B cell (primary cell): ENCODE measurements at regions of chr5 and their contacts with region 1.

Region 1: GRCh38 chr5:180950291-180950949 is 38.2 kb upstream of the BTNL3 start:
- DNase-seq: no peak
- ATAC-seq: no peak
- H3K4me3 ChIP-seq: no peak overlapping the region
- H3K4me3 Mint-ChIP-seq: no peak overlapping the region
- H3K27ac ChIP-seq: no peak overlapping the region
- H3K27ac Mint-ChIP-seq: no peak overlapping the region
- H3K4me1 ChIP-seq: no peaks in the 10 kb centered on the region
- H3K4me1 Mint-ChIP-seq: no peaks in the 10 kb centered on the region
- H3K27me3 ChIP-seq: no peaks in the 10 kb centered on the region
- H3K27me3 Mint-ChIP-seq: no peaks in the 10 kb centered on the region
- CTCF ChIP-seq: no peak

Region 2: GRCh38 chr5:181005791-181006190 is 55.4 kb after region 1 on chr5:
- CTCF ChIA-PET with region 1: no interaction called
- POLR2A ChIA-PET with region 1: no interaction called
- intact Hi-C with region 1: loop called (anchors 10 kb)
- DNase-seq: no peak
- ATAC-seq: no peak
- H3K4me3 ChIP-seq: no peak overlapping the region
- H3K4me3 Mint-ChIP-seq: no peak overlapping the region
- H3K27ac ChIP-seq: no peak overlapping the region
- H3K27ac Mint-ChIP-seq: no peak overlapping the region
- H3K4me1 ChIP-seq: no peaks in the 10 kb centered on the region
- H3K4me1 Mint-ChIP-seq: peaks cover 3% of the 10 kb centered on the region
- H3K27me3 ChIP-seq: peaks cover 0 to 8% (median 0%) of the 10 kb centered on the region in 4 experiments
- H3K27me3 Mint-ChIP-seq: peaks cover 4% of the 10 kb centered on the region
- CTCF ChIP-seq: no peak

Region 3: DNA sequence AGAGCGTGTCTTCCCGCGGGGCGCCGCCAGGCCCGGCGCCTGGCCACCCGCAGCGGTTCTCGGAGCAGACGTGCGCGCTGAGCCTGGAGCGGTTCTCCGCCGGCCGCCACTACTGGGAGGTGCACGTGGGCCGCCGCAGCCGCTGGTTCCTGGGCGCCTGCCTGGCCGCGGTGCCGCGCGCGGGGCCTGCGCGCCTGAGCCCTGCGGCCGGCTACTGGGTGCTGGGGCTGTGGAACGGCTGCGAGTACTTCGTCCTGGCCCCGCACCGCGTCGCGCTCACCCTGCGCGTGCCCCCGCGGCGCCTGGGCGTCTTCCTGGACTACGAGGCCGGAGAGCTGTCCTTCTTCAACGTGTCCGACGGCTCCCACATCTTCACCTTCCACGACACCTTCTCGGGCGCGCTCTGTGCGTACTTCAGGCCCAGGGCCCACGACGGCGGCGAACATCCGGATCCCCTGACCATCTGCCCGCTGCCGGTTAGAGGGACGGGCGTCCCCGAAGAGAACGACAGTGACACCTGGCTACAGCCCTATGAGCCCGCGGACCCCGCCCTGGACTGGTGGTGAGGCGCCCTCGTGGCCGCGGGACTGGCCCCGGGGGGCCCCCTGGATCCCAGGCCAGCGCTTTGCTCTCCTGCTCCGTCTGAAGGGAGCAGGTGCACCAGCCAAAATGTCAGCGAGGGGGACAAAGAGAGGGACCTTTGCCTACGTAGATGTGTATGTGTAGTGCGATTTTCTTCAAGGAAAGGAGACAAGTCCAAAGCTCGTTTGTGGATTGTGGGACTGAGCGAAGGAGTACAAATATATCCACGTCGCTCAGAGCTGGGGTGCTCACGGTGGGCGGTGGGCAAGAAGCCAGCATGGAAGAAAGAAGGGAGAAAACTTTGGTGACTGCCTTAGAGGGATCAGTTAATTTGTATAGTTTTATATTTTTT is 109.1 kb after region 1 on chr5:
- CTCF ChIA-PET with region 1: no interaction called
- POLR2A ChIA-PET with region 1: no interaction called
- intact Hi-C with region 1: no loop called
- DNase-seq: no peak
- ATAC-seq: peak; percentile 21
- H3K4me3 ChIP-seq: no peak overlapping the region
- H3K4me3 Mint-ChIP-seq: peak overlapping the region; percentile 64
- H3K27ac ChIP-seq: no peak overlapping the region
- H3K27ac Mint-ChIP-seq: no peak overlapping the region
- H3K4me1 ChIP-seq: peaks cover 0 to 8% of the 10 kb centered on the region in 2 donors
- H3K4me1 Mint-ChIP-seq: peaks cover 16% of the 10 kb centered on the region
- H3K27me3 ChIP-seq: peaks cover 0 to 51% (median 31%) of the 10 kb centered on the region in 4 experiments
- H3K27me3 Mint-ChIP-seq: peaks cover 58% of the 10 kb centered on the region
- CTCF ChIP-seq: no peak